AG04450 (cell line): ENCODE measurements at regions of chr9 and their contacts with region 1.

Region 1: DNA sequence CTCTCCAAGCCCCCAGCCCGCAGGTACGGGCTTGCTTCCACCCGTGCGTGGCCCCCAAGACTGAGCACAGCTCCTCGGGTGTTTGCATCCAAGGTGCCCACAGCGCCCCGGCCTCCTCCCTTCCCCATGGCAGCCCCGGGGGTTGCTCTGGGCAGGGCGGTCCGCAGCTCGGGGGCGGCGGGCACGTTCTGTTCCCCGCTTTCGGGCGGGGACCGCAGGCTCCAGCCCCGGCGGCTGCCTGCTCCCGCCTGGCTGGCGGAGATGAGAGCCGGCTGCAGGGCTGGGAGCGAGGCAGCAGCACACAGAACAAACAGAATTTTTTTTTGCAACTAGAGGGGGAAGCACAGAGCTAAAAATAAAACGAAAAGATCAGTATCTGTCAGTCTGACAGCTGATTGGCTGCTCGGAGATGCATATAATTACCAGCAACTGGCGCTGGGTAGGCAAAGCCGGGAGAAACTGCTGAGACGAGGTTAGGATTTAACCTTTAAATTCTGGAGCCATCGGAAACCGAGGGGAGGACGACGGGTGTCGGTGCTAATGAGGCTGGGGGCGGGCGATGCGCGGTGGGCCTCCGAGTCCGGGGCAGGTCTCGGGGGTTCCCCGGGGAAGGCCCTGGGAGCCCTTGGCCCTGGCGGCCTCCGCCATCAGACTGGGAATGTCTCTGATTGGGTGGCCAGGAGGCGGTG is 142.7 kb upstream of the IER5L start:
- DNase-seq: peak; percentile 58
- H3K4me3 ChIP-seq: peak overlapping the region; percentile 44
- H3K27ac ChIP-seq: peak overlapping the region; percentile 52
- H3K27me3 ChIP-seq: no peaks in the 10 kb centered on the region
- CTCF ChIP-seq: peak; percentile 31

Region 2: GRCh38 chr9:129333953-129334724 is 13.4 kb after region 1 on chr9:
- CTCF ChIA-PET with region 1: no interaction called
- POLR2A ChIA-PET with region 1: interaction called, 10 read pairs
- DNase-seq: peak; percentile 87
- H3K4me3 ChIP-seq: peak overlapping the region; percentile 12; the same call in 1 of the 2 replicates
- H3K27ac ChIP-seq: peak overlapping the region; percentile 86
- H3K27me3 ChIP-seq: no peaks in the 10 kb centered on the region
- CTCF ChIP-seq: 0 out of 2 replicates have a peak, but pooled peaks have one; percentile 2